Esophagus muscularis mucosa (tissue), 4 donors: ENCODE measurements at regions of chr1 and their contacts with region 1.

Region 1: GRCh38 chr1:45876000-45876617 is 72.7 kb downstream of the MAST2 start:
- DNase-seq: no peak
- H3K4me3 ChIP-seq: no peak overlapping the region
- H3K27ac ChIP-seq: no peak overlapping the region
- H3K4me1 ChIP-seq: peaks cover 0 to 1% (median 0%) of the 10 kb centered on the region in 4 donors
- H3K27me3 ChIP-seq: no peaks in the 10 kb centered on the region
- CTCF ChIP-seq: no peak
- EP300 ChIP-seq: no peak
- POLR2A ChIP-seq: no peak

Region 2: DNA sequence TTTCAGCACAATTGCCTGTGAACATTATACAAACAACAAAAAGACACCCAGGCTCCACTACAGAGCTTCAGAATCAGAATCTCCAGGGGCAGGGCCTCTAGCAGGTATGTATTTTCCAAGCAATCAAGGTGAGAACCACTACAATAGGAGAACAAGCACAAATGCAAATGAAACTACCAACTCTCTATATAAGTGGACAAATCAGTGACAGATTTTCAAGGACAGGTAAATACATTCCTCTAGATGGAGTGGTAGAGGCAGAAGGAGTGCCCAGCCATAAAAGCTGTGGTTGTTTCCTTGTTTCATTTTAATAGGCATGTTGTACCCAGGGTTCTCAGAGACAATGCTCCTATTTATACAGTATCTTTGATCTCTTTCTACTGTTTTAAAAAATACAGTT is 232.1 kb before region 1 on chr1:
- intact Hi-C with region 1: no loop called
- DNase-seq: no peak
- H3K4me3 ChIP-seq: no peak overlapping the region
- H3K27ac ChIP-seq: no peak overlapping the region
- H3K4me1 ChIP-seq: peaks cover 6 to 12% (median 10%) of the 10 kb centered on the region in 4 donors
- H3K27me3 ChIP-seq: no peaks in the 10 kb centered on the region
- CTCF ChIP-seq: no peak
- EP300 ChIP-seq: no peak
- POLR2A ChIP-seq: no peak

Region 3: GRCh38 chr1:45769261-45769932 is 106.7 kb before region 1 on chr1:
- intact Hi-C with region 1: no loop called
- DNase-seq: no peak
- H3K4me3 ChIP-seq: no peak overlapping the region
- H3K27ac ChIP-seq: no peak overlapping the region
- H3K4me1 ChIP-seq: peaks cover 0 to 3% (median 0%) of the 10 kb centered on the region in 4 donors
- H3K27me3 ChIP-seq: no peaks in the 10 kb centered on the region
- CTCF ChIP-seq: no peak
- EP300 ChIP-seq: no peak
- POLR2A ChIP-seq: no peak

Region 4: DNA sequence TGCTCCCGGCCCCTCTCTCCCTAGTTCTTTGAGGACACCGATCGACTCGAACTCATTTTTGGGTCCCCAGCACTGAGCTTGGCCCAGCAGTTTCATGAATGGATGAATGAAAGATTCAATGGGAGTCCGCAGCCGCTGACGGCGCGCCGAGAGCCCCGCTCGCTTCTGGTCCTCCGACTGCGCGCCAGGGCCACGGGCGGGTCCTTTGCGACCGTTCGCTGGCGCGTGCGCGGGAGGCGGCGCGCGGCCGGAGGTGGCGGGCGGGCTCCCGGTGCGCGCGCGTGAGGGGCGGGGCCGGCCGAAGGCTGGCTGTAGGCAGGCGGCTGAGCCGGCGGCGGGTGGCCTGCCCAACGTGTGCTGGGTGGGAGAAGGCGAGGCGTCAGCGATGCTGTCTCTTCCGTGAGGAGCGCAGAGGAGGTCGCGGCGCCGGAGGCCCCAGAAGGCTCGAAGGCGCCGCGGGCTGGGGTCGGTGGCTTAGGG is 72.8 kb before region 1 on chr1 and contains the start of gene MAST2:
- intact Hi-C with region 1: loop called (anchors 10 kb)
- DNase-seq: peak; percentile 93
- H3K4me3 ChIP-seq: peak within 1 kb of the TSS; percentile 56 to 77 (median 64)
- H3K27ac ChIP-seq: peak within 1 kb of the TSS; percentile 85 to 88 (median 86)
- H3K4me1 ChIP-seq: peaks cover 10 to 31% (median 29%) of the 10 kb centered on the region in 4 donors
- H3K27me3 ChIP-seq: no peaks in the 10 kb centered on the region
- CTCF ChIP-seq: peak in 1 of 3 experiments; percentile 31
- EP300 ChIP-seq: no peak
- POLR2A ChIP-seq: peak; percentile 39
- total RNA-seq, gene MAST2: 44.9 to 78.3 (median 68.5) TPM

Region 5: DNA sequence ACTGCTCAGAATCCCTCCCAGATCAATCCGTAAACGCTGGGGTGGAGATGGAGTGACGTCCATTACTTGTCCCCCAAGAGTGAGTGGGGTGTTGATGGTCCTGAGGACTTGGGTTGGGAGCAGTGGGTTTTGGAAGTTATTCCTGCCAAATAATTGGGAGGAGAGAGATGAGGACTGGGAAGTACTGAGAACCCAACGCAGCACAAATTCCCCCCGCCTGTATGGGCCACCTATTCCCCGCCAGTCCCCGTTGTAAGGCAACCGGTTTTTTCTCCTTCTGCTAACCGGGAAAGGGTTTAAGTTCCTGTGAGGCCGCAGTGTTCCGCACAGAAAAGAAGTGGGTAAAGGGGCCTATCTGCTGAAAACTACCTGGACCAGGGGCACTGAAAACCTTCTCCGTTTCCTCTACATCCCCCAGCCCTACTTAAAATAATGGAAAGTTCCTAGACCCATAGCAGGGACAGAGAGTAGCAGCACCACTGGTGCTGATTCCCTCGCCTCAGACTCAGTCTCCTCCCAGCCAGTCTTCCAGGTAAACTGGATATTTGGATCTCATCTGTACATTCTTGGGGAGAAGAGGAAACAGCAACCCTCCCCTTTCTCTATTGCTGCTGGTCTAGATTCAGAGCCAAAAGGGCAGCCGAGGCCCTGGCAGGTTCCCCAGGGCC is 327.8 kb after region 1 on chr1:
- intact Hi-C with region 1: no loop called
- DNase-seq: no peak
- H3K4me3 ChIP-seq: peak overlapping the region; percentile 81 to 88 (median 85)
- H3K27ac ChIP-seq: peak overlapping the region; percentile 87 to 90 (median 88)
- H3K4me1 ChIP-seq: peaks cover 35 to 51% (median 43%) of the 10 kb centered on the region in 4 donors
- H3K27me3 ChIP-seq: no peaks in the 10 kb centered on the region
- CTCF ChIP-seq: no peak
- EP300 ChIP-seq: no peak
- POLR2A ChIP-seq: no peak